Endothelial cell of umbilical vein (primary cell): ENCODE measurements at regions of chr11 and their contacts with region 1.

Region 1: DNA sequence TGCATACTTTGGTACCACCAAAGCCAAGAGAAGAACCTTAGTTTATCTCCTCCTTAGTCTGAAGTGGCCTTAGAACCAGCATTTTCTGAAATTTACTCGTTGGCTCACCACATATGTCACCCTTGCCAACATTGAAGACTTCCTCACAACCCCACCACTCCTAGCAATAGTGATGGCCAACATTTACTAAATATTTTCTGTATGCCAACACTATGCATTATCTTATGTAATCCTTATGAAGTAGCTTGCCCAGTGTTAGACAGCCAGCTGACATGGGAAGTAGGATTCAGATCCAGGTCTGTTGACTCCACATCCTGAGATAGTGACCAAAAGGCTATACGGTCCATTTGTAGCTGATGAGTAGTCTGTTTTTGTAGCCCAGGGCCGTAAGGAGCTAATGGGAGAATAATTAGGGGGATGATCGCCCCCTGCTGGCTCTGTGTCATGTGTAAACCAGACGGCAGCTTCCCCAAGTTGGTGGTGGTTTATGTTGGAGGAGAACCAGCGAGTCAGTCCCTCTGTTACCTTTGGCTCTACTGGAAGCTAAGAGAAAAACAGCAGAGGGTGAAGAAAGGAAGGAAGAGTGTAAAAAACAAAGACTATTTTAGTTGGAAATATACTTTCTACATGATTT is 120.5 kb upstream of the RASSF10 start:
- DNase-seq: peak; percentile 96
- H3K4me3 ChIP-seq: no peak overlapping the region
- H3K27ac ChIP-seq: no peak overlapping the region
- H3K4me1 ChIP-seq: peaks cover 9% of the 10 kb centered on the region
- H3K27me3 ChIP-seq: no peaks in the 10 kb centered on the region
- CTCF ChIP-seq: peak; percentile 82 to 86
- POLR2A ChIP-seq: no peak

Region 2: DNA sequence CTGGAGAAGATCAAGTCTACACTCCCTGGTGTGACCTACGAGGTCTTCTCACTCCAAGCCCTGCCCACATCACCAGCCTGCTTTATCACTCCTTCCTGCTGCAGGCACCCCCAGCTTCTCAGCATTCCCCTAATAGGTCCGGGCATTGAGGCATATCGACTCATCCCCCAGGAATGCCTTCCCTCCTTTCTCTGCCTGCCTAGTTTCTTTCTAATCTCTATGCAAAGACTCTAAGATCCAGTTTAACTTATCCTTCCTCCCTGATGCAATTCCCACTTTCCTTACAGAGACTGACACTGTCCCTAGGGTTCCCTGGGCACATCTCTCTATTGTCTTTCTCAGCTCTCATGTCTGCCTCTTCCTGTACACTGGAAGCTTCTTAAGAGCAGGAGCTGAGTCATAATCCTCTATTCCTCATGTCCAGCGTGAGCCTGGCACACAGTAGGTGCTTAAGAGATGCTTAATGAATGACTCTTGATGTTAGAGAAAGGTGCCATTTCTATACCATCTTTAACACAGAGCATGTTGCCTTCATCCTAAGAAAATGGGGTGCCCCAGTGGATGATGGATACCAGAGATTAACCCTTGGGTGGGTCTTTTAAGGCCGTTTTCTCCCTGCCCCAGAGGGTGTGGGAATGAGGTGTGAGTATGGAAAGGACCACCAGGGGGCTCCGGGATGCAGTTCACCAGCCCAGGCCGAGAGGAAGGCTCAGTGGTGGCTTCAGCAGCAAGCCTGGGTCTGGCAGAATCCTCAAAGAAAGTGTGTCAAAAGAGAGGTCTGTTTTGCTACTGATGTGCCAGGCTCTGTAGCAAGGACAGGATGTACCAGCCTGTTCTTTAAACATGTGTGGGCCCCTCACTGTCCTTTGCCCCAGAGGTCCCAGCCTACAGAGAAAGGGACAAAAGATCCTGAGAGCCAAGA is 476.6 kb before region 1 on chr11:
- CTCF ChIA-PET with region 1: interaction called, 22 read pairs
- POLR2A ChIA-PET with region 1: no interaction called
- dilution Hi-C with region 1: no loop called
- intact Hi-C with region 1: loop called (anchors 1 kb)
- DNase-seq: peak; percentile 82
- H3K4me3 ChIP-seq: no peak overlapping the region
- H3K27ac ChIP-seq: peak overlapping the region; percentile 85
- H3K4me1 ChIP-seq: peaks cover 17% of the 10 kb centered on the region
- H3K27me3 ChIP-seq: no peaks in the 10 kb centered on the region
- CTCF ChIP-seq: peak; percentile 88 to 90
- POLR2A ChIP-seq: peak; percentile 19

Region 3: DNA sequence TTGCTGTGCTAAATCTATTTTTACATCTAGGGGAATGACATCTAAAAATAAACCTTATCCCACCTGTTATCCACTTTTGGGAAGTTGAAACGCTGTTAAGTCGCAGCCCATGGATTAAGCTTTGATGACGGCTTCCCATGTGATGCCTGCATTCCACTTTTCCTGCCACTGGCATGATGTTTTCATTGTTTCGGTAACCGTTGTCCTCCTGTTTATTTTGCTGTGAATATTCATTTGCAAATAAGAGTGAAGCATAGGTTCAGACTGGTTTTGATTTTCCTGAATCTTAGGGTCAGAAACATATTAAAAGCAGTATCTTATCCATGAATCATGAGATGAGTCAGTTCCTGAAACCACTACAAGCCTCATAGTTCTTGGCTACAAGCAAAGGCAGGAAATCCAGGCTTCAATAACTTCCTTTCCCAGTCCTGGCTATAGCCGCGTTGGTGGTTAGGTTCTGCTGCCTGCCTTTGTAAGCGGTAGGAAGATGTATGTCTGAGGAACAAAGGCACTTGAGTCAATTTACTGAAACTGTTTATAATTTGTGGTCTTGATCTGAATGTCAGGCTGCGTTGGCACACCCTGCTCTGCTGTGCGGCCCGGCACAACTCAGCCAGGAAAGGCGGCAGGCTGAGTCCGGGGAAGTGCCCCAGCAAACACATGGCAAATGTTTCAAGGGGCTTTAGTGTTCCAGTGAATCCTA is 195.0 kb before region 1 on chr11:
- CTCF ChIA-PET with region 1: interaction called, 9 read pairs
- POLR2A ChIA-PET with region 1: no interaction called
- dilution Hi-C with region 1: no loop called
- intact Hi-C with region 1: loop called (anchors 1 kb)
- DNase-seq: peak; percentile 99
- H3K4me3 ChIP-seq: peak overlapping the region in 1 of 3 experiments; percentile 28
- H3K27ac ChIP-seq: peak overlapping the region; percentile 95
- H3K4me1 ChIP-seq: peaks cover 54% of the 10 kb centered on the region
- H3K27me3 ChIP-seq: no peaks in the 10 kb centered on the region
- CTCF ChIP-seq: no peak
- POLR2A ChIP-seq: peak; percentile 28

Region 4: DNA sequence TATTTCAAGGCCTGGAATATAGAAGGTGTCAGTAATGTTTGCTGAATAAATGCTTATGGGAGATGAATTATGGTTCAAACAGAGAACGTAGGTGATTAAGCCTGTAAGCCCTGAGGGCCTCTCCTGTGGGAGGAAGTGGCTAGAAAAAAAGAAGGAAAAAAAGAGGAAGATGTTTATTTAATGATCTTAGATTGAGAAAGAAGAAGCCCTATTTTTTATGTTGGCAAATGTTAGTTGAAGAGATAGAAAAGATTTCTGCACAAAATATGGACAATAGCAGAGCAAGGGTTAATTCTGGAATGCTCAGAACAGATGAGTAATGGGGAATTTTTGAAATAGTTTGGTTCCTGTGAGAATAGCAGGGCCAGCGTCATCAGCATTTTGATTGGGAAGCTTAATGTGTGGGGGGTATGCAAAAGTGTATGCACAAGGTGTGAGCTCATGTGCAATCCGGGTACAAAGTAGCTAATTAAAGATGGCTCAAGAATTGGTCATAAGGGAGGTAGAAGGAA is 118.8 kb before region 1 on chr11:
- CTCF ChIA-PET with region 1: interaction called, 11 read pairs
- POLR2A ChIA-PET with region 1: no interaction called
- dilution Hi-C with region 1: no loop called
- intact Hi-C with region 1: no loop called
- DNase-seq: peak; percentile 63
- H3K4me3 ChIP-seq: no peak overlapping the region
- H3K27ac ChIP-seq: peak overlapping the region; percentile 71
- H3K4me1 ChIP-seq: peaks cover 25% of the 10 kb centered on the region
- H3K27me3 ChIP-seq: no peaks in the 10 kb centered on the region
- CTCF ChIP-seq: no peak
- POLR2A ChIP-seq: no peak

Region 5: GRCh38 chr11:12827929-12828812 is 60.5 kb before region 1 on chr11:
- CTCF ChIA-PET with region 1: interaction called, 15 read pairs
- POLR2A ChIA-PET with region 1: no interaction called
- dilution Hi-C with region 1: no loop called
- intact Hi-C with region 1: loop called (anchors 2 kb)
- DNase-seq: peak; percentile 91
- H3K4me3 ChIP-seq: peak overlapping the region; percentile 24 to 84 (median 63)
- H3K27ac ChIP-seq: peak overlapping the region; percentile 52
- H3K4me1 ChIP-seq: peaks cover 43% of the 10 kb centered on the region
- H3K27me3 ChIP-seq: no peaks in the 10 kb centered on the region
- CTCF ChIP-seq: no peak
- POLR2A ChIP-seq: peak; percentile 73

Region 6: GRCh38 chr11:12864316-12865156 is 24.1 kb before region 1 on chr11:
- CTCF ChIA-PET with region 1: interaction called, 26 read pairs
- POLR2A ChIA-PET with region 1: no interaction called
- dilution Hi-C with region 1: no loop called
- intact Hi-C with region 1: no loop called
- DNase-seq: peak; percentile 97
- H3K4me3 ChIP-seq: no peak overlapping the region
- H3K27ac ChIP-seq: peak overlapping the region; percentile 32
- H3K4me1 ChIP-seq: peaks cover 7% of the 10 kb centered on the region
- H3K27me3 ChIP-seq: no peaks in the 10 kb centered on the region
- CTCF ChIP-seq: no peak
- POLR2A ChIP-seq: no peak

Region 7: DNA sequence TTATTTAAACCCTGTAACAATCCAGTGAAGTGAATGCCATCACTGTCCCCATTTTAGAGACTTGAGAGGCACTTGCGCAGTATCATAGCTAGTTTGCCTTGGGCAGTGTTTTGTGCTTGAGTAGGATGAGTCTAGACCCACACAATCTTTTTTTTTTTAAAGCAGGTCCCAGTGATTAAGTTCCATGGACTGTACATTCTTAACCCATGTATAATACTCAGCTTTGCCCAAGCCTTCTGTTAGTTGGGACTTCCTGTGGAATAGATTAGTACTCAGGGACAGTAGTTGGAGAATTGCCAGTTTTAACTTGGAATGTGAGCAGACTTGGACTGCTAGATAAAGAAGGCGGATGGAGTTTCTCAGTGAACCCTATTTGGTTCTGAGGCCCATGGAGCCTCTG is 11.9 kb after region 1 on chr11:
- CTCF ChIA-PET with region 1: interaction called, 13 read pairs
- POLR2A ChIA-PET with region 1: no interaction called
- dilution Hi-C with region 1: no loop called
- intact Hi-C with region 1: no loop called
- DNase-seq: peak; percentile 50
- H3K4me3 ChIP-seq: no peak overlapping the region
- H3K27ac ChIP-seq: no peak overlapping the region
- H3K4me1 ChIP-seq: peaks cover 16% of the 10 kb centered on the region
- H3K27me3 ChIP-seq: no peaks in the 10 kb centered on the region
- CTCF ChIP-seq: no peak
- POLR2A ChIP-seq: no peak